ENCODE measurements at regions of chr5 and their contacts with region 1.

Region 1: DNA sequence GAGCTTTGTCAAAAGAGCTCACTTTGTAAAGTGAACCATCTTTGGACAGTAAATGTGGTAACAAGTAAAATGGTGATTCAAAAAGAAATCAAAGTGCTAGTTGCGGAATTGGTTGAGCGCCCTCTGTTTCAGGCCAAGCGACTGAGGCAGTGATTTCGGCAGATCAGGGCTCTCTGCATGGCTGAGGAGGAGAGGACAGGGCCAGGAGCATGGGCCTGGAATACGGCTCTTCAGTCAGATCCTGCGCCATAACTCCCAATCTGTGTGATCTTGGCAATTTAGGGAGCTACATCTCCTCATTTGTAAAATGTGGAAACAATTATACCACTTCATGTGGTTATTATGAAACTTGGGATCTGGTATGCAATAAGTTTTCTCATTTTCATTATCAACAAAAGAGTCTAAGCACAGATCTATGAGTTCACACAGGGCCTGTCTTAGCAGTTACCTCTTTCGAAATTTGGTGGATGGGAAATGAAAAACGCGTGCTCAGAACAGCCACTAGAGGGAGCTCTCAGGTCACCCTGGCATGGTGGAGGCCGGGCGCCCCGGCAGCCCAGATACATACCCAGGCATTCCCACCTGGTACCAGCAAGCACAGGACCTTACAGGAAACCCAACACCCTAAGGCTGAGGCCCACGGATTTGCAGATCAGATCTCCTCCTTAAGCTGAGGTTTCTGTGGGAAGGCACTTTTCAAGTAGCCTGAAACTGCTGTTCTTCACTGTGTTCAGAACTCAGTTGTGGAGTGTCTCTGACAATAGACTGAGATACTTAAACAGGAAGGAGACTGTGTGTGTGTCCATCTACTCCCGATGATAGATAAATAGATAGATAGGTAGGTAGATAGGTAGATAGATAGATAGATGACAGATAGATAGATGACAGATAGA is 303.7 kb downstream of the RAB3C start:
- DNase-seq: peak; percentile 18 to 81 (median 47)
- ATAC-seq: peak; percentile 75 to 81 (median 80)
- H3K4me3 ChIP-seq: no peak overlapping the region
- H3K4me3 Mint-ChIP-seq: peak overlapping the region in 1 of 3 donors; percentile 51
- H3K27ac ChIP-seq: no peak overlapping the region
- H3K27ac Mint-ChIP-seq: peak overlapping the region in 1 of 2 donors; percentile 68
- H3K4me1 ChIP-seq: peaks cover 5 to 14% of the 10 kb centered on the region in 2 experiments
- H3K4me1 Mint-ChIP-seq: peaks cover 26 to 32% (median 27%) of the 10 kb centered on the region in 3 donors
- H3K27me3 ChIP-seq: peaks cover 0 to 6% of the 10 kb centered on the region in 2 experiments
- H3K27me3 Mint-ChIP-seq: peaks cover 2 to 3% of the 10 kb centered on the region in 2 donors

Region 2: DNA sequence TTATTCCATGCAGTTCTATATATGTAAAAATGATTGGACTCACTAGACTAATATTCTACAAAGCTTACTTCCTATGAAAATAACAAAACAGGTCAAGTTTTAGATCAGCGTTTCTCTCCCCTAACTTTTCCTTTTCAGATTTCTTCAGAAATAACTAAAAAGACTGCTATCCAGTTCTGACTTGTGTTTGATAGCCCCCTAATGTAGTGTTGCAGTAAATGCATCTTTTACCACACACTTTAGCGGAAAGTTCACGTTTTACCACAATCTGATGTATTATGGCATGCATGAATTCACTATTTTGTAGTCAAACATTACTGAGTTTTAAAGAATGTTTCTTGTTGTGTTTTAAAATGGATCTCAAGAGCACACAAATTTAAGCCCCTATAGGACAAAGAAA is 11.0 kb before region 1 on chr5:
- CTCF ChIA-PET with region 1: interaction called, 7 to 11 read pairs
- POLR2A ChIA-PET with region 1: interaction called in 1 of 2 experiments, 5 read pairs
- DNase-seq: no peak
- ATAC-seq: no peak
- H3K4me3 ChIP-seq: no peak overlapping the region
- H3K4me3 Mint-ChIP-seq: no peak overlapping the region
- H3K27ac ChIP-seq: no peak overlapping the region
- H3K27ac Mint-ChIP-seq: no peak overlapping the region
- H3K4me1 ChIP-seq: no peaks in the 10 kb centered on the region
- H3K4me1 Mint-ChIP-seq: no peaks in the 10 kb centered on the region
- H3K27me3 ChIP-seq: peaks cover 0 to 2% of the 10 kb centered on the region in 2 experiments
- H3K27me3 Mint-ChIP-seq: peaks cover 12 to 20% of the 10 kb centered on the region in 2 donors

Region 3: GRCh38 chr5:58898538-58898937 is 12.0 kb after region 1 on chr5:
- CTCF ChIA-PET with region 1: interaction called, 8 to 27 read pairs
- POLR2A ChIA-PET with region 1: no interaction called
- DNase-seq: no peak
- ATAC-seq: no peak
- H3K4me3 ChIP-seq: no peak overlapping the region
- H3K4me3 Mint-ChIP-seq: no peak overlapping the region
- H3K27ac ChIP-seq: no peak overlapping the region
- H3K27ac Mint-ChIP-seq: no peak overlapping the region
- H3K4me1 ChIP-seq: no peaks in the 10 kb centered on the region
- H3K4me1 Mint-ChIP-seq: no peaks in the 10 kb centered on the region
- H3K27me3 ChIP-seq: no peaks in the 10 kb centered on the region
- H3K27me3 Mint-ChIP-seq: no peaks in the 10 kb centered on the region

Region 4: GRCh38 chr5:59007460-59008063 is 121.0 kb after region 1 on chr5:
- CTCF ChIA-PET with region 1: interaction called, 9 to 14 read pairs
- POLR2A ChIA-PET with region 1: no interaction called
- DNase-seq: peak in 1 of 35 experiments; percentile 31
- ATAC-seq: no peak
- H3K4me3 ChIP-seq: no peak overlapping the region
- H3K4me3 Mint-ChIP-seq: no peak overlapping the region
- H3K27ac ChIP-seq: no peak overlapping the region
- H3K27ac Mint-ChIP-seq: no peak overlapping the region
- H3K4me1 ChIP-seq: peaks cover 0 to 28% of the 10 kb centered on the region in 2 experiments
- H3K4me1 Mint-ChIP-seq: peaks cover 65 to 76% (median 71%) of the 10 kb centered on the region in 3 donors
- H3K27me3 ChIP-seq: no peaks in the 10 kb centered on the region
- H3K27me3 Mint-ChIP-seq: no peaks in the 10 kb centered on the region

Region 5: DNA sequence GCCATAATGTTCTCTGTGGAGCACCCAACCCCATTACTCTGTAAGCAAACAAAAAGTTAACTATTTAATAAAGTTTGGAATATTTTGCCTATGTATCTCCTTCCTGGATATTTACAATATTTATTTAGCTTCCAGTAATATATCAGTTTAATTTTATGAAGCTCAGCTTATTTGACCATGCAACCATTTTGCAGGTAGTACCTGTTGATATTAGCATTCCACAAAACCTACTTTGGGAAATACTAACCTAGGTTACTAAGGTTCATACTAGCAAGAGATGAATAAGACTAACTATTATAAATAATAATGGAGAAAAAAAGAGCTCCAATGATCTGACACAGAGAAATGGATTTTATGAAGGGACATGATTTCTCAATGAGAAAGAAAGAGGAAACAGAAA is 500.6 kb after region 1 on chr5:
- CTCF ChIA-PET with region 1: interaction called, 3 to 11 read pairs
- POLR2A ChIA-PET with region 1: no interaction called
- DNase-seq: no peak
- ATAC-seq: no peak
- H3K4me3 ChIP-seq: no peak overlapping the region
- H3K4me3 Mint-ChIP-seq: no peak overlapping the region
- H3K27ac ChIP-seq: no peak overlapping the region
- H3K27ac Mint-ChIP-seq: no peak overlapping the region
- H3K4me1 ChIP-seq: no peaks in the 10 kb centered on the region
- H3K4me1 Mint-ChIP-seq: no peaks in the 10 kb centered on the region
- H3K27me3 ChIP-seq: no peaks in the 10 kb centered on the region
- H3K27me3 Mint-ChIP-seq: peaks cover 2 to 7% of the 10 kb centered on the region in 2 donors

Measured in T-cell (primary cell).